Activated B cell treated with CpG ODN at 0.5 μM for 24 hours (primary cell): ENCODE measurements at regions of chr11 and their contacts with region 1.

Region 1: GRCh38 chr11:554824-555472 is 5.6 kb downstream of the LMNTD2 start:
- DNase-seq: peak; percentile 70
- ATAC-seq: peak; percentile 93
- H3K4me3 Mint-ChIP-seq: peak overlapping the region; percentile 24
- H3K27ac Mint-ChIP-seq: no peak overlapping the region
- H3K4me1 Mint-ChIP-seq: peaks cover 6% of the 10 kb centered on the region
- H3K27me3 Mint-ChIP-seq: no peaks in the 10 kb centered on the region
- CTCF ChIP-seq: no peak

Region 2: DNA sequence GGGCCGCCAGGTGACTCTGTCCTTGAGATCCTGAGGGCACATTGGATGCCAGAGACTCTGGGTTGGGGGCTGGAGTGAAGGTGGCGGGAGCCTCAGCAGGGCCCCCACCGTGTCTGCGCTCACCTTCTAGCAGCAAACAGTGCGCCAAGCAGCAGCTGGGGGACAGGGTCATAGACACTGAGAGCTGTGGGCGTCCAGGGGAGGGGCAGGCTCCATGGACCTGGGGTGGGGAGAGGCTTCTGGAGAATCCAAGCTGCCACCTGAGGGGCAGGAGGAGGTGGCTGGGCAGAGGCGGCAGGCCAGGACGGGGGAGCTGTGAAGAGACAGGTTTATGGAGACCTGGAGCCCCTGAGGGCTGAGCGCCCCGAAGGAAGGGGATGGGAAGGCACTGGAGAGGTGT is 29.3 kb after region 1 on chr11:
- CTCF ChIA-PET with region 1: no interaction called
- POLR2A ChIA-PET with region 1: interaction called, 13 read pairs
- intact Hi-C with region 1: no loop called
- DNase-seq: no peak
- ATAC-seq: no peak
- H3K4me3 Mint-ChIP-seq: no peak overlapping the region
- H3K27ac Mint-ChIP-seq: no peak overlapping the region
- H3K4me1 Mint-ChIP-seq: peaks cover 13% of the 10 kb centered on the region
- H3K27me3 Mint-ChIP-seq: no peaks in the 10 kb centered on the region
- CTCF ChIP-seq: no peak

Region 3: DNA sequence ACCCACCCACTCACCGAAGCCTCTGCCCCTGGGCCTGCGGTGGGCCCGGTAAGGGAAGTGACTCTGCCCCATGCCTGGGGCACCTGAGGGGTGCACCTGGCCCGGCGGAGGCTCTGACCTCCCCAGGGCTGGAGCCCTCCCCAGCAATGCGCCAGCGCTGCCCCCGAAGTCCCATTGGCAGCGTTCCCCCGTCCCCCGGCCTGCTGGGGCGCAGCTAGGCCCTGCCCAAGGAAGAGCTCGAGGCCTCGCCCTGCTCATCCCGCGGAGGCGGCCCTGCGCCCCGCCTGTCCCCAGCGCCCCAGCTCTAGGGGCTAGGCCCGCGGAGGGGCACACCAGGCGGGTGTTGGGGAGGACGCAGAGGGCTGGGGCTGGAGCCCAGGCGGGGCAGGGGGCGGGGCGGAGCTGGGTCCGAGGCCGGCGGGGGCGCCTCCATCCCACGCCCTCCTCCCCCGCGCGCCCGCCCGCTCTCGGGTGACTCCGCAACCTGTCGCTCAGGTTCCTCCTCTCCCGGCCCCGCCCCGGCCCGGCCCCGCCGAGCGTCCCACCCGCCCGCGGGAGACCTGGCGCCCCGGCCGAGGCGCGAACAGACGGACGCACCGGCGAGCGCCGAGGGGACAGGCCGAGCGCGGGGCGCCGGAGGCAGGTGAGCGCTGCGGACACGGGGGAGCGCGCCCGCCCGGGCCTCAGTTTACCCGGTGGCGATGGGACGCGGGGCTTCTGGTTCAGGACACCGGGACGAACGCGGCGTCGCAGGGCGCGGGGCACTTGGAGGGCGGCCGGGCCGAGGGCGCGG is 150.9 kb after region 1 on chr11 and contains the start of gene EPS8L2:
- CTCF ChIA-PET with region 1: no interaction called
- POLR2A ChIA-PET with region 1: no interaction called
- intact Hi-C with region 1: no loop called
- DNase-seq: no peak
- ATAC-seq: peak; percentile 63
- H3K4me3 Mint-ChIP-seq: no peak within 1 kb of the TSS
- H3K27ac Mint-ChIP-seq: no peak within 1 kb of the TSS
- H3K4me1 Mint-ChIP-seq: peaks cover 14% of the 10 kb centered on the region
- H3K27me3 Mint-ChIP-seq: peaks cover 13% of the 10 kb centered on the region
- CTCF ChIP-seq: no peak
- total RNA-seq, gene EPS8L2: 5.6 and 5.9 TPM in 2 replicates